GM12878 (cell line): ENCODE measurements at regions of chr14 and their contacts with region 1.

Region 1: GRCh38 chr14:68466491-68467032 is 326.3 kb downstream of the ZFP36L1 start:
- DNase-seq: no peak
- ATAC-seq: no peak
- H3K4me3 ChIP-seq: no peak overlapping the region
- H3K27ac ChIP-seq: no peak overlapping the region
- H3K4me1 ChIP-seq: peaks cover 16% of the 10 kb centered on the region
- H3K27me3 ChIP-seq: no peaks in the 10 kb centered on the region
- CTCF ChIP-seq: no peak
- EP300 ChIP-seq: no peak
- POLR2A ChIP-seq: no peak
- RAD21 ChIP-seq: no peak

Region 2: GRCh38 chr14:68423686-68424085 is 42.9 kb before region 1 on chr14:
- CTCF ChIA-PET with region 1: no interaction called
- POLR2A ChIA-PET with region 1: interaction called, 3 read pairs
- RAD21 ChIA-PET with region 1: no interaction called
- SMC1A ChIA-PET with region 1: no interaction called
- in situ Hi-C with region 1: no loop called
- intact Hi-C with region 1: loop called (anchors 5 kb)
- DNase-seq: no peak
- ATAC-seq: no peak
- H3K4me3 ChIP-seq: no peak overlapping the region
- H3K27ac ChIP-seq: no peak overlapping the region
- H3K4me1 ChIP-seq: peaks cover 13% of the 10 kb centered on the region
- H3K27me3 ChIP-seq: no peaks in the 10 kb centered on the region
- CTCF ChIP-seq: no peak
- EP300 ChIP-seq: no peak
- POLR2A ChIP-seq: no peak
- RAD21 ChIP-seq: no peak

Region 3: GRCh38 chr14:68451696-68452373 is 14.7 kb before region 1 on chr14:
- CTCF ChIA-PET with region 1: interaction called, 12 read pairs
- POLR2A ChIA-PET with region 1: interaction called, 4 read pairs
- RAD21 ChIA-PET with region 1: interaction called, 6 read pairs
- SMC1A ChIA-PET with region 1: interaction called, 17 read pairs
- in situ Hi-C with region 1: no loop called
- intact Hi-C with region 1: no loop called
- DNase-seq: no peak
- ATAC-seq: peak; percentile 34; the same call in 2 of the 3 replicates
- H3K4me3 ChIP-seq: no peak overlapping the region
- H3K27ac ChIP-seq: no peak overlapping the region
- H3K4me1 ChIP-seq: peaks cover 5% of the 10 kb centered on the region; the same call in 1 of the 2 replicates
- H3K27me3 ChIP-seq: no peaks in the 10 kb centered on the region
- CTCF ChIP-seq: no peak
- EP300 ChIP-seq: no peak
- POLR2A ChIP-seq: no peak
- RAD21 ChIP-seq: no peak

Region 4: DNA sequence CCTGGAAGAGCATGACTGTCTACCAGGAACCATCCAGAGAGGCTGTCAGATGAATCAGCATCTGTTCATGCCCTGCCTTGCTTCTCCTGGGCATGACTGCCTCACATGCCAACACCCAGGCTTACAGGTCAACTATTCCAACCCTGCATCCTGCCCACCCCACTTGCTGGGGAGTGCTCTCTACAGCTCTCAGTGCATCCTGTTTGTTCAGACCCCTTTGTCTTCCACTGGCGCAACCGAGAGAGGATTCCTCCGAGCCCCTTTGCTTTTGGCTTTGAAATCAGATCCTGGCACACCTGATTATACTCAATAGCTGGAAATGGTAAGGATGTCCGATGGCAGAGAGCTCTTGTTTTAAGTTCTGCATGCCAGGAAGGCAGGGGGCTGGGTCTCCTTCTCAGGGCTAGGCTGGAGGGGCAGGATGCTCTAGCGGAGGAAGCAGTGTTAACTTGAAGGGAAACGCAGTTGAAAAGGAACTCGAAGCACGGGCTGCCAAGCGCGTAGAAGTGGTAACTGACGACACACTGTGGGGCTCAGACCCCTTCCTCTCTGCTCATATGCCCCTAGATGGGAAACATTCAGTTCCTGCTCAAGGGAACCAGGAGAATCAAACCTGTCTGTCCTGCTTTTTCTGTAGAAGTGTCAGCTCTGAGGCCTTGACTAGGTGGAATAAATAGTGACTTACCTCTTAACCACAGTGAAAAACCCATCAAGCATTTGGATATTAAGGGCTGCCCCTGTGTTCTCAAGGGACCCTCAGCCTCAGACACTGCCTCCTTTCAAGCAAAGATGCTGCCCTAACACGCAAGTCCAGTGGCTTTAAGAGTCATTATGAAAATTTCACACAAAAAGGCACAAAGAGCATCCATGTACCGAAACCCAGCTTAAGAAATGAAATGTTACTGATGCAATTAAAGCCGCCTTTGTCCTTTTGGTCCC is 28.8 kb after region 1 on chr14:
- CTCF ChIA-PET with region 1: no interaction called
- POLR2A ChIA-PET with region 1: no interaction called
- RAD21 ChIA-PET with region 1: interaction called, 5 read pairs
- SMC1A ChIA-PET with region 1: interaction called, 22 read pairs
- in situ Hi-C with region 1: no loop called
- intact Hi-C with region 1: no loop called
- DNase-seq: peak; percentile 83
- ATAC-seq: peak; percentile 92
- H3K4me3 ChIP-seq: no peak overlapping the region
- H3K27ac ChIP-seq: peak overlapping the region; percentile 68
- H3K4me1 ChIP-seq: peaks cover 24% of the 10 kb centered on the region
- H3K27me3 ChIP-seq: no peaks in the 10 kb centered on the region
- CTCF ChIP-seq: no peak
- EP300 ChIP-seq: peak; percentile 71 to 87; a peak in 2 of 4 replicates
- POLR2A ChIP-seq: no peak
- RAD21 ChIP-seq: 0 out of 2 replicates have a peak, but pooled peaks have one; percentile 8

Region 5: GRCh38 chr14:68513838-68514620 is 47.5 kb after region 1 on chr14:
- CTCF ChIA-PET with region 1: interaction called, 3 read pairs
- POLR2A ChIA-PET with region 1: no interaction called
- RAD21 ChIA-PET with region 1: interaction called, 10 read pairs
- SMC1A ChIA-PET with region 1: interaction called, 19 read pairs
- in situ Hi-C with region 1: no loop called
- intact Hi-C with region 1: no loop called
- DNase-seq: peak; percentile 92
- ATAC-seq: peak; percentile 92
- H3K4me3 ChIP-seq: no peak overlapping the region; the same call in 1 of the 2 replicates
- H3K27ac ChIP-seq: peak overlapping the region; percentile 85
- H3K4me1 ChIP-seq: peaks cover 24% of the 10 kb centered on the region
- H3K27me3 ChIP-seq: no peaks in the 10 kb centered on the region
- CTCF ChIP-seq: no peak
- EP300 ChIP-seq: 0 out of 4 replicates have a peak, but pooled peaks of 1 of the 2 experiments have one; percentile 46
- POLR2A ChIP-seq: peak; percentile 47; the same call in 1 of the 2 replicates
- RAD21 ChIP-seq: no peak

Region 6: DNA sequence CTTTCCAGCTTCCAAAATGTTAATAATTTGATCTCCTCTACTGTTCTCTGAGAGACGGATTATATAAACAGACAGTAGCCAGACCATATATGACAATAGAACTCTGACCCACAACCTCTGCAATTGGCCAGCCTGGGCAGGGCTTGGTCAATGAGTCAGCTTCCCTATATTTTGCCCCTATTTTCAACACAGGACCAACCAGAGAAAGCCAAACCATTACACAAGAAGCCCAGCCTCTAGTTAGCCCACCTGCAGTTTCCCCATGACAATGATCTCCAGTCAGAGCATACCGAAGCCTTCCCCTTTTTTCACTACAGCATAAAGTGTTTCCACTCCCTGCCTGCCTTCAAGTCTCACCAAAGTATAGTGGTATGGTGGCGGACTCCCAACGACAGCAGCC is 717.2 kb after region 1 on chr14:
- CTCF ChIA-PET with region 1: no interaction called
- POLR2A ChIA-PET with region 1: no interaction called
- RAD21 ChIA-PET with region 1: no interaction called
- SMC1A ChIA-PET with region 1: no interaction called
- in situ Hi-C with region 1: no loop called
- intact Hi-C with region 1: no loop called
- DNase-seq: no peak
- ATAC-seq: no peak
- H3K4me3 ChIP-seq: no peak overlapping the region
- H3K27ac ChIP-seq: no peak overlapping the region
- H3K4me1 ChIP-seq: no peaks in the 10 kb centered on the region
- H3K27me3 ChIP-seq: no peaks in the 10 kb centered on the region
- CTCF ChIP-seq: no peak
- EP300 ChIP-seq: no peak
- POLR2A ChIP-seq: no peak
- RAD21 ChIP-seq: no peak